Common myeloid progenitor, CD34-positive (primary cell): ENCODE measurements at regions of chr7 and their contacts with region 1.

Region 1: GRCh38 chr7:77247206-77247850 is 47.7 kb upstream of the FGL2 start:
- DNase-seq: peak; percentile 85 to 89 (median 88)
- H3K4me3 ChIP-seq: no peak overlapping the region
- H3K27ac ChIP-seq: no peak overlapping the region
- H3K4me1 ChIP-seq: peaks cover 0 to 9% (median 0%) of the 10 kb centered on the region in 4 experiments
- H3K27me3 ChIP-seq: no peaks in the 10 kb centered on the region

Region 2: GRCh38 chr7:77199013-77199966 is 48.0 kb before region 1 on chr7 and contains the start of gene FGL2:
- CTCF ChIA-PET with region 1: interaction called, 17 read pairs
- POLR2A ChIA-PET with region 1: no interaction called
- DNase-seq: peak in 2 of 3 donors; percentile 20 to 34
- H3K4me3 ChIP-seq: peak within 1 kb of the TSS; percentile 41 to 91 (median 76)
- H3K27ac ChIP-seq: peak within 1 kb of the TSS; percentile 59 to 73
- H3K4me1 ChIP-seq: peaks cover 14 to 33% (median 26%) of the 10 kb centered on the region in 4 experiments
- H3K27me3 ChIP-seq: no peaks in the 10 kb centered on the region

Region 3: GRCh38 chr7:77258014-77258413 is 10.7 kb after region 1 on chr7:
- CTCF ChIA-PET with region 1: interaction called, 11 read pairs
- POLR2A ChIA-PET with region 1: no interaction called
- DNase-seq: no peak
- H3K4me3 ChIP-seq: no peak overlapping the region
- H3K27ac ChIP-seq: no peak overlapping the region
- H3K4me1 ChIP-seq: no peaks in the 10 kb centered on the region
- H3K27me3 ChIP-seq: no peaks in the 10 kb centered on the region

Region 4: GRCh38 chr7:77269360-77270093 is 22.2 kb after region 1 on chr7:
- CTCF ChIA-PET with region 1: interaction called, 17 read pairs
- POLR2A ChIA-PET with region 1: no interaction called
- DNase-seq: peak in 2 of 3 donors; percentile 35 to 40
- H3K4me3 ChIP-seq: no peak overlapping the region
- H3K27ac ChIP-seq: no peak overlapping the region
- H3K4me1 ChIP-seq: peaks cover 0 to 15% (median 5%) of the 10 kb centered on the region in 4 experiments
- H3K27me3 ChIP-seq: no peaks in the 10 kb centered on the region

Region 5: GRCh38 chr7:77326696-77327628 is 79.6 kb after region 1 on chr7:
- CTCF ChIA-PET with region 1: interaction called, 50 read pairs
- POLR2A ChIA-PET with region 1: no interaction called
- DNase-seq: peak; percentile 42 to 83 (median 75)
- H3K4me3 ChIP-seq: peak overlapping the region in 2 of 7 experiments; percentile 12 to 53
- H3K27ac ChIP-seq: no peak overlapping the region
- H3K4me1 ChIP-seq: peaks cover 37 to 67% (median 55%) of the 10 kb centered on the region in 4 experiments
- H3K27me3 ChIP-seq: no peaks in the 10 kb centered on the region

Region 6: GRCh38 chr7:77331938-77332695 is 84.8 kb after region 1 on chr7:
- CTCF ChIA-PET with region 1: interaction called, 50 read pairs
- POLR2A ChIA-PET with region 1: no interaction called
- DNase-seq: peak; percentile 84 to 89 (median 86)
- H3K4me3 ChIP-seq: peak overlapping the region in 1 of 7 experiments; percentile 17
- H3K27ac ChIP-seq: no peak overlapping the region
- H3K4me1 ChIP-seq: peaks cover 37 to 55% (median 46%) of the 10 kb centered on the region in 4 experiments
- H3K27me3 ChIP-seq: no peaks in the 10 kb centered on the region

Region 7: DNA sequence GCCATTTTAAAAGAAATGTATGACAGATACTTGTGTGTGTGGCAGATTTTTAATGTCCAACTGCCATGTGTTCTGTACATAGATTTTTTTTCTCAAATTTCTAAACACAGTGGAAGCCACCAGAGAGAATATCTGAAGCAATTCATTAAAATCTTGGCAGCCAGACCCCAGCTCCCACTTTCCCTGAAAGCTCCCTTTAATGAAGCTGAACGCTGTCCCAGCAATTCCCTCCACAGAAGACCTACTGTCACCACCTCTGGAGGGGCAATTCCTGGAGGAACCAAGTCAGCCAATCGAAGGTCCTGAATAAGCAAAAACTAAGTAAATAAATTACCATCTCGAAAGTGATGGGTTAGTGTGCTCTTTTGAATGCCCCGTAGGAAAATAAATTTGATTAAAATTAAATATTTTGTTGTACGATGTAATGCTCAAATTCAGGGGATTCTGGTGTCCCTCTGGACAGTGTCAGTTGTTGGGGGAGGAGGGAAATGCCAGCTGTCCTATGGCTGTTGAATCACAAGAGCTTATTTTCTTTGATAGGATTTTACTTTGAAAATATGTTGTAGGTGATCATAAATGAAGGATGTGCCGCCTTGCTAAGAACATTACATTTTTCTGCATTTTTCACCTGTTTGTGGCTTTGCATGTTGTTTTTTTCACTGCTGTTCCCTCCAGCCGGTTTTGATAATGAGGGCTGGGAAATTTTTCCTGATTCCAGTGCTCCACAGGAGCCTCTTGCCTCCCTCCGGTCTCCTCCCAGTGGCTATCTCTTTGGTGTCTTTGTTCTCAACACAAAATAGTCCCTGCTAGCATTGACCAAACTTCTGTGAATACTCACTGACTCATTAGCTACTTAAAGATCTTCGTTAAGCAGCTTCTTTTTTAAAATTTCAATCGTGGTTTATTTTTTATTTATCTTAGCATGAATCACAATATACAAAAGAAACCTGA is 178.0 kb after region 1 on chr7:
- CTCF ChIA-PET with region 1: no interaction called
- POLR2A ChIA-PET with region 1: no interaction called
- DNase-seq: no peak
- H3K4me3 ChIP-seq: no peak overlapping the region
- H3K27ac ChIP-seq: no peak overlapping the region
- H3K4me1 ChIP-seq: peaks cover 4 to 26% (median 9%) of the 10 kb centered on the region in 4 experiments
- H3K27me3 ChIP-seq: no peaks in the 10 kb centered on the region